ENCODE measurements at regions of chr20 and their contacts with region 1.

Region 1: GRCh38 chr20:62302341-62303058 is at the start of gene ADRM1:
- DNase-seq: peak; percentile 86 to 99
- H3K4me3 ChIP-seq: peak within 1 kb of the TSS; percentile 99
- H3K27ac ChIP-seq: peak within 1 kb of the TSS; percentile 82
- H3K4me1 ChIP-seq: peaks cover 20% of the 10 kb centered on the region
- H3K27me3 ChIP-seq: no peaks in the 10 kb centered on the region
- CTCF ChIP-seq: peak; percentile 89
- total RNA-seq, gene ADRM1: 172 and 173 TPM in 2 replicates

Region 2: DNA sequence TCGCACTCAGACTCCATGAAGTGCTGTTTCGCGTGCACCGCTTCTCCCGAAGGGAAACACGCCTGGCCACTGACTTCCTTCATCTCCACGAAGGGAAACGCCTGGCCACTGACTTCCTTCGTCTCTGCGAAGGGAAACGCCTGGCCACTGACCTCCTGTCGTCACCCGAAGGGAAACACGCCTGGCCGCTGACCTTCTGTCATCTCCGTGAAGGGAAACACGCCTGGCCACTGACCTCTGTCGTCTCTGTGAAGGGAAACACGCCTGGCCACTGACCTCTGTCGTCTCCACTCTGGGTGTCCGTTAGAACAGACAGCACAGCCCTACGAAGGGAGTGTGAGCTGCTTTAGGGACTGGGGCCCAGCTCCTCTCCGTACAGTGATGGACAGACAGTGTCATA is 16.8 kb before region 1 on chr20:
- CTCF ChIA-PET with region 1: no interaction called
- POLR2A ChIA-PET with region 1: no interaction called
- intact Hi-C with region 1: no loop called
- DNase-seq: no peak
- H3K4me3 ChIP-seq: no peak overlapping the region
- H3K27ac ChIP-seq: no peak overlapping the region
- H3K4me1 ChIP-seq: no peaks in the 10 kb centered on the region
- H3K27me3 ChIP-seq: no peaks in the 10 kb centered on the region
- CTCF ChIP-seq: no peak

Region 3: GRCh38 chr20:62350093-62350628 is 47.7 kb after region 1 on chr20:
- CTCF ChIA-PET with region 1: no interaction called
- POLR2A ChIA-PET with region 1: interaction called, 7 read pairs
- intact Hi-C with region 1: loop called (anchors 1 kb)
- DNase-seq: peak; percentile 97 to 99
- H3K4me3 ChIP-seq: peak overlapping the region; percentile 12; the same call in 1 of the 2 replicates
- H3K27ac ChIP-seq: peak overlapping the region; percentile 87
- H3K4me1 ChIP-seq: peaks cover 55% of the 10 kb centered on the region
- H3K27me3 ChIP-seq: no peaks in the 10 kb centered on the region
- CTCF ChIP-seq: no peak

Region 4: GRCh38 chr20:62386383-62387218 is 84.1 kb after region 1 on chr20 and contains the start of gene RPS21:
- CTCF ChIA-PET with region 1: interaction called, 9 read pairs
- POLR2A ChIA-PET with region 1: interaction called, 5 read pairs
- intact Hi-C with region 1: loop called (anchors 1 kb)
- DNase-seq: peak; percentile 85 to 93
- H3K4me3 ChIP-seq: peak within 1 kb of the TSS; percentile 100
- H3K27ac ChIP-seq: peak within 1 kb of the TSS; percentile 36
- H3K4me1 ChIP-seq: peaks cover 23% of the 10 kb centered on the region
- H3K27me3 ChIP-seq: no peaks in the 10 kb centered on the region
- CTCF ChIP-seq: no peak
- total RNA-seq, gene RPS21: 2,188 and 2,275 TPM in 2 replicates

Region 5: GRCh38 chr20:62500237-62500864 is 197.9 kb after region 1 on chr20:
- CTCF ChIA-PET with region 1: interaction called, 5 read pairs
- POLR2A ChIA-PET with region 1: no interaction called
- intact Hi-C with region 1: loop called (anchors 2 kb)
- DNase-seq: peak in 1 of 2 experiments; percentile 72
- H3K4me3 ChIP-seq: no peak overlapping the region
- H3K27ac ChIP-seq: no peak overlapping the region
- H3K4me1 ChIP-seq: no peaks in the 10 kb centered on the region
- H3K27me3 ChIP-seq: no peaks in the 10 kb centered on the region
- CTCF ChIP-seq: peak; percentile 95